ENCODE measurements at regions of chr15 and their contacts with region 1.

Region 1: GRCh38 chr15:99273801-99274200 is 22.5 kb downstream of the LRRC28 start:
- DNase-seq: no peak

Region 2: GRCh38 chr15:99155961-99156450 is 117.8 kb before region 1 on chr15:
- intact Hi-C with region 1: no loop called
- DNase-seq: no peak

Region 3: DNA sequence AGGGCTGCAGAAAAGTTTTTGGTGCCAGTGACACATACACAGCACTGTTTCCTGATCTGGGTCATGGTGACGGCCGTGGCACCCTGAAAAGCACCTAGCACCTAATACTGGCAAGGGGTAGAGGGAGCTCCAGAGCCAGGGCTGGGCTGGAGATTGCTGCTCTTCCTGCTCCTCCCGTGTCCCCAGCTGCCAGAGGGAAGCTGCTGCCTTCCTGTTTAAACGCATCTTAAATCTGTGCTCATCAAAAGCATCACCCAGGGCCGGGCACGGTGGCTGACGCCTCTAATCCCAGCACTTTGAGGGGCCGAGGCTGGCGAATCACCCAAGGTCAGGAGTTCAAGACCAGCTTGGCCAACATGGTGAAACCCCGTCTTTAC is 135.3 kb after region 1 on chr15:
- intact Hi-C with region 1: no loop called
- DNase-seq: no peak

Region 4: DNA sequence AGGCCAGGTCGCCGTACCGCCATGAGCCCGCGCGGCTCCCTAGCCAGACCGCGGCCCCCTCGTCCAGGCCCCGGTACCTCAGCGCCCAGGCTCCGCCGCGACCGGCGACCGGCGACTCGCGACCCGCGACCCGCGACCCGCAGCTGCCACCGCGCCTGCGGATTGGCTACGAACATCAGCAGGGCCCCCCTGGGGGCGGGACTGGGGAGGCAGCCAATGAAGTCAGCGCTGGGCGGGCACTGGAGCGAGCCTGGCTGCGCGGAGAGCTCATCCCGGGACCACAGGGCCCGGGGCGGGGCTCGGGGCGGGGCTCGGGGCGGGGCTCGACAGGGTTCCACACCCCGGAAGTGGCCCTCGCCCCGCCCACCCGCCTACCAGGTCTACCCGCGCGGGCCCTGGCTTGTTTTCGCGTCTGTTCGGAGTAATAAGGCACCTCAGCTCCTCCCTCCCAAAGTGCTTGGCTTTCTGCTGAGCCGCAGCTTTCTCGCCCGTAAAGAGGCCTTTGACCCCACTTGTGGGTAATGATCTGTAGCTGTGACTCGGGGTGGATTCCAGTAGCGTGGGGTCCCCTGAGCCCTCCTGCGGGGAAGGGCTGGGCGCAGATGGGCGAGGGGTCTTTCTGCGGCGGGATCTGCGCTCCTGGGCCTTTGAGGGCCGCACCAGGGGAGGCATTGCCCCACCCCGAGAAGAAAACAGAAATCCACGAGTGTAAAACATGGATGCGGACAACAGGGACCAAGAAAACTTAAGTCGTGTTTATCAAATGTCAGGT is 459.7 kb after region 1 on chr15 and contains the start of gene LYSMD4:
- intact Hi-C with region 1: loop called (anchors 5 kb)
- DNase-seq: peak; percentile 99
- total RNA-seq, gene LYSMD4: 12.7 TPM

Region 5: GRCh38 chr15:99755692-99756409 is 482.1 kb after region 1 on chr15:
- intact Hi-C with region 1: loop called (anchors 2 kb)
- DNase-seq: peak; percentile 78